Activated B cell treated with CpG ODN at 0.5 μM for 24 hours (primary cell): ENCODE measurements at regions of chr14 and their contacts with region 1.

Region 1: DNA sequence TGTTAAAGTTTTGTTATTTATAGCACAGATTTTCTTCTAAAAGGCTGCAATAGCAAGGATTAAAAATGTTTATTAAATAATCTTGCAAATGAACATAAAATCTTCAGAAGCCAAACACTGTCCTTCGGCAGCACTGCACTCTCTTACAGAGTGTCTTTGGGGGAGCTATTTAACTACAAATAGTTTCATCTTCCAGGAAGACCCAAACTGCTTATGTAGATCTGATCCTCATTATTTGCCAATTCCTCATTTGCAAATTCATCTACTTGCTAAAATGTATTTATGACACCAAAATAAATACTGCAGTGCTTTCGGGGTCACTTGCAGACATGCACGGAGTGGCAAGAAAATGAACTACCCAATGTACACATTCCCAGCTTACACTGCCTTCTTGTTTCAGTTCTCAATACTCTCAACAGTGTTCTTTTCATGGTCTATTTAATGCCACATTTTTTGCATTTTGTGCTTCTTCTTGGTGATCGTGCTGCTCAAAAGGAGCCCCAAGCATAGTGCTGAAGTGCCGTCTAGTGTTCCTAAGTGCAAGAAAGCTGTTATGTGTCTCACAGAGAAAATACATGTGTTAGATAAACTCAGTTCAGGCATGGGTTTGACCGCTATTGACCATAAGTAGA is 128.1 kb downstream of the PRKD1 start:
- DNase-seq: no peak
- ATAC-seq: peak; percentile 95
- H3K4me3 Mint-ChIP-seq: peak overlapping the region; percentile 48
- H3K27ac Mint-ChIP-seq: peak overlapping the region; percentile 2
- H3K4me1 Mint-ChIP-seq: peaks cover 15% of the 10 kb centered on the region
- H3K27me3 Mint-ChIP-seq: no peaks in the 10 kb centered on the region
- CTCF ChIP-seq: no peak

Region 2: GRCh38 chr14:29548948-29549370 is 250.6 kb before region 1 on chr14:
- CTCF ChIA-PET with region 1: interaction called, 6 read pairs
- POLR2A ChIA-PET with region 1: no interaction called
- intact Hi-C with region 1: loop called (anchors 1 kb)
- DNase-seq: no peak
- ATAC-seq: peak; percentile 78
- H3K4me3 Mint-ChIP-seq: no peak overlapping the region
- H3K27ac Mint-ChIP-seq: no peak overlapping the region
- H3K4me1 Mint-ChIP-seq: no peaks in the 10 kb centered on the region
- H3K27me3 Mint-ChIP-seq: no peaks in the 10 kb centered on the region
- CTCF ChIP-seq: no peak

Region 3: GRCh38 chr14:29724991-29725390 is 74.6 kb before region 1 on chr14:
- CTCF ChIA-PET with region 1: no interaction called
- POLR2A ChIA-PET with region 1: no interaction called
- intact Hi-C with region 1: no loop called
- DNase-seq: no peak
- ATAC-seq: no peak
- H3K4me3 Mint-ChIP-seq: no peak overlapping the region
- H3K27ac Mint-ChIP-seq: no peak overlapping the region
- H3K4me1 Mint-ChIP-seq: no peaks in the 10 kb centered on the region
- H3K27me3 Mint-ChIP-seq: no peaks in the 10 kb centered on the region
- CTCF ChIP-seq: no peak

Region 4: DNA sequence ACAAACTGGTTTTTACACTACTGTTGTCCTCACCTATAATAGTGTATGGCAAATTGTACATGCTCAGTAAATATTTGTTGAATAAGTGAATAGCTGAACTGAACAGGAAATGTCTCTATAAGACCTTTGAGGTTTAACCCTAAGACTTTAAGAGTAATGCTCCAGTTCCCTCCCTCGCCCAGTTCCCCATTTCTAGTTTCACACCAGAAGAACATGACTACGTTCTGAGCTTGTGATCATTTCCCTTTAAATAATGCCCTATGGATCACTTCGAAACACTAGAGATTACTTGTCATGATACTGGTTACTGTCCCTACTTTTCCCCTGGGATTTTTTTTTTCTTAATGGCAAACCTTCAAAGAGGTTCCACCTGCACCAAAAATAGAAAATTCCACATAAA is 58.7 kb after region 1 on chr14:
- CTCF ChIA-PET with region 1: no interaction called
- POLR2A ChIA-PET with region 1: interaction called, 15 read pairs
- intact Hi-C with region 1: loop called (anchors 1 kb)
- DNase-seq: no peak
- ATAC-seq: peak; percentile 80
- H3K4me3 Mint-ChIP-seq: peak overlapping the region; percentile 80
- H3K27ac Mint-ChIP-seq: peak overlapping the region; percentile 98
- H3K4me1 Mint-ChIP-seq: peaks cover 43% of the 10 kb centered on the region
- H3K27me3 Mint-ChIP-seq: no peaks in the 10 kb centered on the region
- CTCF ChIP-seq: no peak

Region 5: DNA sequence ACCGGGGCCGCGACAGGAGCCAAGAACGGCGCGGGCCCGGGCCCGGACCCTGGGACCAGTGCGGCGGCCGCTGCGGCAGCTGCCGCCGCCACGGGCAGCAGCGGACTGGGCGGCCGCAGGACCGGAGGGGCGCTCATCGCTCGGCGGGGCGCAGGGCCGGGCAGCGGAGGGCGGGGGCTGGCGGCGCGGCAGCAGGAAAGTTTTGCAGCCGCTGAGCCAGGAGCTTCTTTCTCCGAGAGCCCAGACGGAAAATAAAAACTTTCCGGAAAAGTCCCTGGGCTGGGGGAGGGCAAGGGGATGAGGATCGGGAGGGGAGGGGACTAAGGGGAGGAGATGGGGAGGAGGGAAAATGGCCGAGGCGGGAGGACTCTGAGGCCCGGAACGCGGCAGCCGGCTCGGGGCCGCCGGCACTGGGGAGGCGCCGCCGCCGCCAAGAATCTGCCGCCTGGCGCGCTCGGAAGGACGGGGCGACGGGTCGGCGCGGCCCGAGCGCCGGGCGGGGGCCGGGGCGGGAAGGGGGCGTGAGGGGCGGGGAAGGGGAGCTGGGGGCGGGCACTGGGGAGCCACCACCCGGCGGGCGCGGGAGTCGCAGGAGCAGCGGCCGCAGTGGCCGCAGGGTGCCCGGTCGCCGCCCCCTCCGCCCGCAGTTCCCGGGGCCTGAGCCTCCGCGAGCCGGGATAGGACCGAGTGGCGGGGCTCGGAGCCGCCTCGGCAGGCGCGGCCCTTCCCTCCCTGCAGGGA is 128.0 kb after region 1 on chr14 and contains the start of gene PRKD1:
- CTCF ChIA-PET with region 1: no interaction called
- POLR2A ChIA-PET with region 1: interaction called, 8 read pairs
- intact Hi-C with region 1: loop called (anchors 1 kb)
- DNase-seq: peak; percentile 32
- ATAC-seq: peak; percentile 68
- H3K4me3 Mint-ChIP-seq: peak within 1 kb of the TSS; percentile 82
- H3K27ac Mint-ChIP-seq: peak within 1 kb of the TSS; percentile 15
- H3K4me1 Mint-ChIP-seq: peaks cover 8% of the 10 kb centered on the region
- H3K27me3 Mint-ChIP-seq: peaks cover 18% of the 10 kb centered on the region
- CTCF ChIP-seq: no peak
- total RNA-seq, gene PRKD1: 5.1 and 6.7 TPM in 2 replicates

Region 6: GRCh38 chr14:30005114-30005808 is 205.7 kb after region 1 on chr14:
- CTCF ChIA-PET with region 1: no interaction called
- POLR2A ChIA-PET with region 1: no interaction called
- intact Hi-C with region 1: loop called (anchors 5 kb)
- DNase-seq: no peak
- ATAC-seq: peak; percentile 61
- H3K4me3 Mint-ChIP-seq: no peak overlapping the region
- H3K27ac Mint-ChIP-seq: no peak overlapping the region
- H3K4me1 Mint-ChIP-seq: no peaks in the 10 kb centered on the region
- H3K27me3 Mint-ChIP-seq: no peaks in the 10 kb centered on the region
- CTCF ChIP-seq: peak; percentile 46

Region 7: DNA sequence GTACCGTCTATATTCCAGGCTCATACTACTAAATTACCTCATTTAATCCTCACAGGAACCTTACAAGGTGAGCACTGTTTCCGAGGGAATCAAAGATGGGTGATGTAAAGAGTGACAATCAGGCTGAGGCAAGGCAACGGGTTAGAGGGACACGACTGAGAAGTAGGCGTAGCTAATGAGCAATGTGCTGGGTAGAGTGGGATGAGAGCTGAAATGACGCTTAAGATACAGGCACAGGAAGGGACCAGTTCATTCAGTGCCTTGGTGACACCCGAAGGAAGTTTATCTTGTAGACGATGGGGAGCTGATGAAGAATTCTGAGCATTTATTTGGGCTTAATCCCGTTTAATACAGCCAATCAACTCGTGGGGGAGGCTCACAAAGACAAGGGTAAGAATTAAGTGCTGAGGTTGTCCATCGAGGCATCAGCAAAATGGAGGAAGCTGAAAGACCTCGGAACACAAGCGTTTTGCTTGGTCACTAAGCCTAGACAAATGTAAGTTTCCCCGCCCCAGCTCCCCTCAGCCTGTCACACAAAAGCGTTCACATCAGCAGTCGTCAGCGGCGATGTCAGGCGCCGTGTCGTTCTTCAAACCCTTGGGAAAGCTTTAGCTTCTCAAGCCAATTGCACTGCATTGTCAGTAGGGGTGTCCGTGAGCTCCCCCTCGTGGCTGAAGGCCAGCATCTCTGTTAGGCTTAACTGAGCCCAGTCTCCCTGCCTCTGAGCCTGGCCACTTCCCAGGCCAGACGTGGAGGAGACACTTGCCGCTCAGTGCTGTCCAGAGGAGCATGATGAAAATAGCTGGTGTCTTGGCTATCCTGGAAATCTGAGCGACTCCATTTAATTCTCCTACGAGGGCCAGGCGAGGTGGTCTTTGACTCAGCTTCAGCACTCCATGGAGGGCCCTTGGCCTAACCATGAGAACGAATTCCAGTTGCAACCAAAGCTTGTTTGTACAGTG is 470.9 kb after region 1 on chr14:
- CTCF ChIA-PET with region 1: no interaction called
- POLR2A ChIA-PET with region 1: no interaction called
- intact Hi-C with region 1: loop called (anchors 5 kb)
- DNase-seq: peak; percentile 33
- ATAC-seq: peak; percentile 82
- H3K4me3 Mint-ChIP-seq: peak overlapping the region; percentile 24
- H3K27ac Mint-ChIP-seq: no peak overlapping the region
- H3K4me1 Mint-ChIP-seq: peaks cover 2% of the 10 kb centered on the region
- H3K27me3 Mint-ChIP-seq: peaks cover 6% of the 10 kb centered on the region
- CTCF ChIP-seq: no peak